HCT116 (cell line): ENCODE measurements at regions of chr9 and their contacts with region 1.

Region 1: GRCh38 chr9:99150451-99151171 is 45.7 kb downstream of the TGFBR1 start:
- DNase-seq: no peak
- ATAC-seq: no peak
- H3K4me3 ChIP-seq: no peak overlapping the region
- H3K27ac ChIP-seq: no peak overlapping the region
- H3K4me1 ChIP-seq: no peaks in the 10 kb centered on the region
- H3K27me3 ChIP-seq: no peaks in the 10 kb centered on the region
- CTCF ChIP-seq: no peak
- POLR2A ChIP-seq: no peak
- RAD21 ChIP-seq: no peak

Region 2: GRCh38 chr9:98303623-98304125 is 846.9 kb before region 1 on chr9:
- CTCF ChIA-PET with region 1: no interaction called
- POLR2A ChIA-PET with region 1: no interaction called
- RAD21 ChIA-PET with region 1: no interaction called
- intact Hi-C with region 1: loop called (anchors 5 kb)
- DNase-seq: no peak
- ATAC-seq: no peak
- H3K4me3 ChIP-seq: no peak overlapping the region
- H3K27ac ChIP-seq: no peak overlapping the region
- H3K4me1 ChIP-seq: peaks cover 0 to 7% of the 10 kb centered on the region in 2 experiments; a peak in 2 of 4 replicates
- H3K27me3 ChIP-seq: no peaks in the 10 kb centered on the region
- CTCF ChIP-seq: no peak
- POLR2A ChIP-seq: no peak
- RAD21 ChIP-seq: no peak

Region 3: GRCh38 chr9:99112750-99113413 is 37.7 kb before region 1 on chr9:
- CTCF ChIA-PET with region 1: no interaction called
- POLR2A ChIA-PET with region 1: no interaction called
- RAD21 ChIA-PET with region 1: no interaction called
- intact Hi-C with region 1: loop called (anchors 1 kb)
- DNase-seq: no peak
- ATAC-seq: no peak
- H3K4me3 ChIP-seq: no peak overlapping the region
- H3K27ac ChIP-seq: no peak overlapping the region
- H3K4me1 ChIP-seq: no peaks in the 10 kb centered on the region
- H3K27me3 ChIP-seq: no peaks in the 10 kb centered on the region
- CTCF ChIP-seq: no peak
- POLR2A ChIP-seq: no peak
- RAD21 ChIP-seq: no peak

Region 4: GRCh38 chr9:99184475-99185347 is 34.1 kb after region 1 on chr9:
- CTCF ChIA-PET with region 1: no interaction called
- POLR2A ChIA-PET with region 1: no interaction called
- RAD21 ChIA-PET with region 1: no interaction called
- intact Hi-C with region 1: no loop called
- DNase-seq: peak; percentile 74
- ATAC-seq: peak; percentile 94
- H3K4me3 ChIP-seq: no peak overlapping the region
- H3K27ac ChIP-seq: no peak overlapping the region
- H3K4me1 ChIP-seq: peaks cover 0 to 4% of the 10 kb centered on the region in 2 experiments; a peak in 1 of 4 replicates
- H3K27me3 ChIP-seq: peaks cover 6% of the 10 kb centered on the region; the same call in 1 of the 2 replicates
- CTCF ChIP-seq: peak; percentile 66 to 94 (median 91)
- POLR2A ChIP-seq: no peak
- RAD21 ChIP-seq: peak; percentile 88